Activated T-helper 1 cell treated with anti-CD3 and anti-CD28 coated beads, Interleukin-12 subunit alpha, Interleukin-12 subunit beta, Interleukin-2, Interleukin-4 antibody, amounts not matched to agents 30 ng/mL and 10 ng/mL and 1 ng/mL, durations not matched to agents 14 hours and 24 hours and 36 hours (primary cell): ENCODE measurements at regions of chr17 and their contacts with region 1.

Region 1: GRCh38 chr17:16415031-16415924 is at the start of gene TRPV2:
- DNase-seq: peak; percentile 37
- H3K4me3 Mint-ChIP-seq: peak within 1 kb of the TSS; percentile 96
- H3K27ac Mint-ChIP-seq: peak within 1 kb of the TSS; percentile 99
- H3K4me1 Mint-ChIP-seq: peaks cover 43% of the 10 kb centered on the region
- H3K27me3 Mint-ChIP-seq: no peaks in the 10 kb centered on the region
- total RNA-seq, gene TRPV2: 38.2 and 42.2 TPM in 2 replicates

Region 2: GRCh38 chr17:15944759-15945529 is 470.3 kb before region 1 on chr17 and contains the start of gene ADORA2B:
- intact Hi-C with region 1: no loop called
- DNase-seq: peak; percentile 12
- H3K4me3 Mint-ChIP-seq: peak within 1 kb of the TSS; percentile 71
- H3K27ac Mint-ChIP-seq: peak within 1 kb of the TSS; percentile 59
- H3K4me1 Mint-ChIP-seq: peaks cover 16% of the 10 kb centered on the region
- H3K27me3 Mint-ChIP-seq: peaks cover 32% of the 10 kb centered on the region
- total RNA-seq, gene ADORA2B: 1.4 and 1.5 TPM in 2 replicates

Region 3: GRCh38 chr17:16363749-16364536 is 51.3 kb before region 1 on chr17:
- intact Hi-C with region 1: loop called (anchors 1 kb)
- DNase-seq: peak; percentile 59
- H3K4me3 Mint-ChIP-seq: no peak overlapping the region
- H3K27ac Mint-ChIP-seq: no peak overlapping the region
- H3K4me1 Mint-ChIP-seq: no peaks in the 10 kb centered on the region
- H3K27me3 Mint-ChIP-seq: peaks cover 3% of the 10 kb centered on the region

Region 4: GRCh38 chr17:16470265-16470664 is 55.0 kb after region 1 on chr17:
- intact Hi-C with region 1: no loop called
- DNase-seq: no peak
- H3K4me3 Mint-ChIP-seq: no peak overlapping the region
- H3K27ac Mint-ChIP-seq: no peak overlapping the region
- H3K4me1 Mint-ChIP-seq: peaks cover 16% of the 10 kb centered on the region
- H3K27me3 Mint-ChIP-seq: no peaks in the 10 kb centered on the region